Right ventricle myocardium superior (tissue), 1 donor: ENCODE measurements at regions of chr1 and their contacts with region 1.

Region 1: GRCh38 chr1:179081687-179082332 is at the start of gene TOR3A:
- DNase-seq: peak; percentile 96
- ATAC-seq: peak; percentile 97
- total RNA-seq, gene TOR3A: 10.1 TPM

Region 2: GRCh38 chr1:179293340-179294327 is 211.8 kb after region 1 on chr1 and contains the start of gene SOAT1:
- intact Hi-C with region 1: loop called (anchors 10 kb)
- DNase-seq: peak; percentile 98
- ATAC-seq: peak; percentile 99
- total RNA-seq, gene SOAT1: 8.5 TPM

Region 3: DNA sequence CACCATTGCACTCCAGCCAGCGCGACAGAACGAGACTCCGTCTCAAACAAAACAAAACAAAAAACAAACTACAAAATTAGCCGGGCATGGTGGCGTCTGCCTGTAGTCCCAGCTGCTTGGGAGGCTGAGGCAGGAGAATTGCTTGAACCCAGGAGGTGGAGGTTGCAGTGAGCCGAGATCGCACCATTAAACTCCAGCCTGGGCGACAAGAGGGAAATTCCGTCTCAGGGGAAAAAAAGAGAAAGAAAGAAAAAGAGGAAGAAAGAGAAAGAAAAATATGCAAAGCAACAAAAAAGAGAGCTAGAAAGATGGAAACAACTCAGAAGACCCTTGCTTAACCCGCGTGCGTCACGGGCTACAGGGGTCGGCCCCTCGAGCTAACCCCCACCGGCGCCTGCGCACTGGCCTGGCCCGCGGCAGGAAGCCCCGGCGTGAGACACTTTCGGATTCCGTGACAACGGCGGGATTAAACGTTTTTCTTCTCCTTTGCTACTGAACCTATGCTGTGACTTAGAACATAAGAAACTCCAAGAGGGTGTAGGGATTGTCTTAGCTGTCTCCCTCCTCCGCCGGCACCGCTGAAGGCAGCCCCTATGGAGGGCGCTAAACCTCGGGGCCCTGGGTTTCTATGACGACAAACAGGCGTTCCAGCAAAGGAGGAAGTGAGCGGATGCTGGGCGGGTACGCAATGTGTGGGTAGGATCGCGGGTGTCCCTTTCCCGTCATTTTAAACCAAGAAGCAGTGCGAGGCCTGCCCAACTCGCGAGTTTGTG is 283.7 kb after region 1 on chr1 and contains the start of gene AXDND1:
- intact Hi-C with region 1: loop called (anchors 5 kb)
- DNase-seq: peak; percentile 92
- ATAC-seq: peak; percentile 97
- total RNA-seq, gene AXDND1: not detected